Activated CD4-positive, alpha-beta memory T cell treated with anti-CD3 and anti-CD28 coated beads for 36 hours (primary cell): ENCODE measurements at regions of chr21 and their contacts with region 1.

Region 1: DNA sequence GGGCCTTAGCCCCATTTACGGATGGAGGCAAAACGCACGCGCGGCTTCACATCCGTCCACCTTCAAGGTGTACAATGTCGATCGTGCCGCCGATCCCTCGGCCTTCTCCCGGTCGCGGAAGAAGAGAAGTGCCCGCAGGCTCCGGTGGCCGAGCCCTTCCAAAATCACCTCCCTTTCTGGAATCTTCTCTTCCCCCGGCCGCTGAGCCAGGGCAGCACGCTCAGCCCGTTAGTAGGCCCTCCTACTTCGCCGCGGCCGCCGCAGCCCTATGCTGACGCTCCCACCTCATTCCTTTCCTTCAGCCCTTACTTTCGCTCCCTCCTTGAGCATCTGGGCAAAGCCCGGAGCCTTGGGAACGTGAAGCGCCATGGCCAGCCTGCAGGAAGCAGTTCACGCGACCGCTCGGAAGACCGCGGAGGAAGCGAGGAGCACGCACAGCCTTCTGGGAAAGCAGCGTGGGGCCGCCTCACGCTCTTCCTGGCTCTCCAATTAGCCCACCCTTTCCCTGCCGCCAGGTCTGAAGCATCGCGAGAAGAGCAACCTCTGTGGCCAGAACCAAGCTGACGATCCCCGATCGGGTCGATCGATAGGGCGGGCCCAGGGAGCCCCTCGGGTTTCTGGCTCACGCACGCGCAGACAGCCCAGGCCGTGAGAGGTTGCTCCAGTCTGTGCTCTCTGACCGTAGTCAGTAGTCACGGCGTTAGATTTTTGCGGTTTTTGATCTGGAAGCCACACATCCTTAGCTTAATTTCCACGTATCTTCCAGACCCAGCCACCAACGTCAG is at the start of gene CCT8:
- DNase-seq: peak; percentile 99
- H3K4me3 Mint-ChIP-seq: peak within 1 kb of the TSS; percentile 96
- H3K27ac Mint-ChIP-seq: peak within 1 kb of the TSS; percentile 97
- H3K4me1 Mint-ChIP-seq: peaks cover 51% of the 10 kb centered on the region
- H3K27me3 Mint-ChIP-seq: no peaks in the 10 kb centered on the region
- total RNA-seq, gene CCT8: 431 to 435 TPM

Region 2: DNA sequence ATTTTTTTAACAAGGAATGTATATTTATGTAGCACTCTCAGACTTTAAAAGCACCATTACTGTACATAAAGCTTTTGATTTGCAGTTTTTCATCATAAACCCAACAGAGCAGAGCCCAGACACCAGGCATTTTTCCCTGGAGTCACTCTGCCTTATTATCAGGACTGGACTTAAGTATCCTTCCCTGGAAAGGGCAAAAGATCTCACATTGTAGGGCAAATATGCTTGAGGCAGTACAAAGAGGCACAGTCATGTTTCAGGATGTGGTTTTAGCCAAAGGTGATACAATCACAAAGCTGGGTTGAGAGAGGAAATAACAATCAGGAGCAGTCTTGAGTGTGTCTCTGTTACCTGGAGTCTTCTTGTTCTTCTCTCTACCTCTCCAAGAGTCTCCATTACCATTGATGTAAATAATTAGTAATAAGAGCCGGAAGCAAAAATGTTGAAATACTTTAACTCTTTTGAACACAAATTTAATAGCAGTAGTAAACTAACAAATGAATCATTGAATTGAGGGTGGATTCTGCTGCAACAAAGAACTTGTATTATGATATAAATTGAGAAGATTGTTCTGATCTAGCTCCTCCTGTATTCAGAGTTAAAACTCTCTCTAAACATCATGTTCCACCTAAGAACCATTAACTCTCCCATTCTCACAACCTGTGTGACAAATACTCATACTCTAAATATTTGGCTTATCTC is 241.2 kb before region 1 on chr21:
- CTCF ChIA-PET with region 1: no interaction called
- POLR2A ChIA-PET with region 1: no interaction called
- intact Hi-C with region 1: loop called (anchors 5 kb)
- DNase-seq: no peak
- H3K4me3 Mint-ChIP-seq: no peak overlapping the region
- H3K27ac Mint-ChIP-seq: peak overlapping the region; percentile 63
- H3K4me1 Mint-ChIP-seq: peaks cover 57% of the 10 kb centered on the region
- H3K27me3 Mint-ChIP-seq: no peaks in the 10 kb centered on the region

Region 3: DNA sequence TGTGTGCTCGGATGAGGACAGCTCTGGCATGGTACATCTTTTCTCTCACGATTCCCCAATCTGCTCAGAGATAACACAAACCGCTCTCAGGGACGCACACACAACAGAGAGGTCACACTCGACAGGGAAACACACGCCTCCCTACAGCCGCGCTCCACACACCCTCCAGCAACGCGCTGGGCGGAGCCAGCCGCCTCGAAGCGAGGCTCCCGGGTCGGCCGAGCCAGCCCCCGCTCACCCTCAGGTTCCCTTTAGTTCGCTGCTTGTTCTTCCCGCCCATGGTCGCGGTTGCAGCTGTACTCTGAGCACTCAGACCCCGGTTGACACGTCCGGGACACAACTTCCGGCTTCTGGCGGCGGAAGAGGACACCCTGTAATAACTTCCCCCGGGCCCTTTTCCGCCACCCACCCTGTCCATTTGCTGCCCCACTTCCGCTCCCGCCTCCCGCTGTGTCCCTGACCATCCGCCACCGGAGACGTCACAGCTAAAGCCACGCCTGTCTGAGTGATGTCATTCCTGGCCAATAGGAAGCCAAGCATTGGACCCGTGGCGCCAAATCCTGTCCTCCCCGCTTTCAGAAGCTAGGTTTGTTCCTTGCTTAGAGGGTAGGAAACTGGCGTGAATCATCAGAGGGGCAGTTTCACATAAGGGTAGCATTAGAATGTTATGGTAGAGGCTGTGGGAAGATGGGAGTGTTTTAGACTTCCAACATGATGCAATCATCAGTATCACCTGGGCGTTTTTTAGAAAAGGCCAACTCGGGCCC is 80.7 kb before region 1 on chr21 and contains the start of gene LTN1:
- CTCF ChIA-PET with region 1: interaction called, 3 read pairs
- POLR2A ChIA-PET with region 1: interaction called, 3 read pairs
- intact Hi-C with region 1: loop called (anchors 1 kb)
- DNase-seq: peak; percentile 100
- H3K4me3 Mint-ChIP-seq: peak within 1 kb of the TSS; percentile 93
- H3K27ac Mint-ChIP-seq: peak within 1 kb of the TSS; percentile 95
- H3K4me1 Mint-ChIP-seq: peaks cover 48% of the 10 kb centered on the region
- H3K27me3 Mint-ChIP-seq: no peaks in the 10 kb centered on the region
- total RNA-seq, gene LTN1: 26.7 to 29.1 TPM

Region 4: DNA sequence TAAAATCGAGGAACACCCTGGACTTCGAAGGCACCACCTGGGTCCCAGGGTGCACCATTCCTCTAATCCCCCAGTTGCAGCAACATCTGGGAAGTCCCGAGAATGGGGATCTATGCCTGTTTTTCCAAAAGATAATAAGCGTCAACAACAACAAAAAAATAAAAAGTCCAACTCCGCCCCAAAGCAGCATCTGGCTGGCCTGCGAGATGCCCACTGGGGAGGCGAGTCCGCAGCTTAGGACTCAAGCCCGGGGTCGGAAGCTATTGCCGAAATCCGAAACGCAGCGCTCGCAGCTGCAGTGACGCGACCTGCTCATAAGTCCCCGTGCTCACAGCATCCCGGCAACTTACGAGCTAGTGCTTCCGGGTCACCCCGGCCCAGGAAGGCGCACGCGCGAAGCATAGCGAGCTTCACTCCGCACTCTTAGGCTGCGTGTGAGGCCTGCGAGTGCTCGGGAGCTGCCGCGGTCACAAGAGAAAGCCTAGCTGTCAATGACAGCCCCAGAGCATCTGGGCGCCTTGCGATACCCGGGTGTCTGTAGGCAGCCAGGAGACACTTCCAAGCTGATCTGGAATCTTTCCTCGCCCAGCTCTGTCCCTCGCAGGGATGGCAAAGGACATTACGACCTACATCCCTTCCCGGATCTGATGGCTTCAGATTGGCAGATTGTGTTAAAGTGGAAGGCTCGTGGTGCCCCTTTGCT is 70.8 kb before region 1 on chr21:
- CTCF ChIA-PET with region 1: no interaction called
- POLR2A ChIA-PET with region 1: interaction called, 8 read pairs
- intact Hi-C with region 1: loop called (anchors 2 kb)
- DNase-seq: peak; percentile 97
- H3K4me3 Mint-ChIP-seq: peak overlapping the region; percentile 89
- H3K27ac Mint-ChIP-seq: peak overlapping the region; percentile 97
- H3K4me1 Mint-ChIP-seq: peaks cover 10% of the 10 kb centered on the region
- H3K27me3 Mint-ChIP-seq: no peaks in the 10 kb centered on the region

Region 5: GRCh38 chr21:29024474-29025327 is 48.7 kb before region 1 on chr21 and contains the start of gene USP16:
- CTCF ChIA-PET with region 1: interaction called, 6 read pairs
- POLR2A ChIA-PET with region 1: interaction called, 20 read pairs
- intact Hi-C with region 1: loop called (anchors 1 kb)
- DNase-seq: peak; percentile 96
- H3K4me3 Mint-ChIP-seq: peak within 1 kb of the TSS; percentile 100
- H3K27ac Mint-ChIP-seq: peak within 1 kb of the TSS; percentile 100
- H3K4me1 Mint-ChIP-seq: peaks cover 50% of the 10 kb centered on the region
- H3K27me3 Mint-ChIP-seq: no peaks in the 10 kb centered on the region
- total RNA-seq, gene USP16: 39.3 to 42.1 TPM

Region 6: GRCh38 chr21:29195981-29196669 is 122.7 kb after region 1 on chr21:
- CTCF ChIA-PET with region 1: no interaction called
- POLR2A ChIA-PET with region 1: no interaction called
- intact Hi-C with region 1: loop called (anchors 2 kb)
- DNase-seq: peak; percentile 85
- H3K4me3 Mint-ChIP-seq: peak overlapping the region; percentile 70
- H3K27ac Mint-ChIP-seq: peak overlapping the region; percentile 80
- H3K4me1 Mint-ChIP-seq: peaks cover 34% of the 10 kb centered on the region
- H3K27me3 Mint-ChIP-seq: peaks cover 3% of the 10 kb centered on the region